AG04450 (cell line): ENCODE measurements at regions of chr9 and their contacts with region 1.

Region 1: GRCh38 chr9:2857564-2858198 is 13.8 kb upstream of the PUM3 start:
- DNase-seq: peak; percentile 33
- H3K4me3 ChIP-seq: no peak overlapping the region
- H3K27ac ChIP-seq: no peak overlapping the region
- H3K27me3 ChIP-seq: peaks cover 13% of the 10 kb centered on the region
- CTCF ChIP-seq: peak; percentile 87

Region 2: DNA sequence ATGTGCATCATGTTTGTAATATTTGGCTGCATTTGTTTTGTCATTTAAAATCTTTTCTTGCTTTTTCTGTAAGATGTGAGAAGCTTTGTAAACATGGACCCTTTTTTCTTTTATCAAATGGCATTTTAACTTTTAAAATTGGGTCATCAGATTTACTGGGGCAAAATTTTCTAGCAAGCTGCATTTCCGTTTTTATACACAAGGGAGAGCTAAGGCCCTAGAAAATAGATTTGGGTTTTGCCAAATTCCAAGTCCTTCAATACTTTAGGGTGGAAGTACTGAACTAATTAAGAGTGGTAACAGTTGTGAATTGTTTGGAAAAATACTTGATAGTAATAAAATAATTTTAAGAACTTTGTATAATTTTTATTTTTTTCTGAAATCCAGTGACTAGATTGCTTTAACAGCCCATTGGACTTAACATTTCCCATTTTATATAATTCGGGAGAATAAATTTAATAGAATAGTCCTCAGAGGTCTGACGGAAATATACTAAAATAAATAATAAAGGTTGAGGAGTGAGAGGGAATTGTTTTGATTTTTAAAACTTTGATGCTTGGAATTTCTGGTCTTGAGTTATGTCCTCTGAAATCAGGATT is 725.1 kb before region 1 on chr9:
- CTCF ChIA-PET with region 1: interaction called, 12 read pairs
- POLR2A ChIA-PET with region 1: no interaction called
- DNase-seq: no peak
- H3K4me3 ChIP-seq: no peak overlapping the region
- H3K27ac ChIP-seq: no peak overlapping the region
- H3K27me3 ChIP-seq: no peaks in the 10 kb centered on the region
- CTCF ChIP-seq: peak; percentile 80

Region 3: DNA sequence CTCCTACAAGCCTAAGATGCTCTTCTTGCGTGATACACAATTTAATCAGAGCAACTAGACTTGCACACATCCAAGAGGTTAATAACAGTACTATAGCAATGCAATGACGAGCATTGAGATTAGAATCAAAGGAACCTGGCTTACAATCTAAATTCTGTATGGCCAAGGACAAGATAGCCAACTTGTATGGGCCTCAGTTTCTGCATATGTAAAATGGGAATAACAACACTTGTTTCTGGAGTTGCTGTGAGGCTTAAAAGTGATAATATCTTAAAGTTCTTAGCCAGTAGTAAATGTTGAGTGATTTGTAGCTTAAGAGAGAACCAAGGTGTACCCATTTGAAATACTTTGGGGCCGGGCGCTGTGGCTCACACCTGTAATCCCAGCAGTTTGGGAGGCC is 11.6 kb before region 1 on chr9:
- CTCF ChIA-PET with region 1: interaction called, 39 read pairs
- POLR2A ChIA-PET with region 1: interaction called, 4 read pairs
- DNase-seq: no peak
- H3K4me3 ChIP-seq: no peak overlapping the region
- H3K27ac ChIP-seq: no peak overlapping the region
- H3K27me3 ChIP-seq: peaks cover 3% of the 10 kb centered on the region
- CTCF ChIP-seq: no peak

Region 4: GRCh38 chr9:2868883-2869282 is 11.2 kb after region 1 on chr9:
- CTCF ChIA-PET with region 1: interaction called, 18 read pairs
- POLR2A ChIA-PET with region 1: no interaction called
- DNase-seq: no peak
- H3K4me3 ChIP-seq: no peak overlapping the region
- H3K27ac ChIP-seq: no peak overlapping the region
- H3K27me3 ChIP-seq: peaks cover 17% of the 10 kb centered on the region
- CTCF ChIP-seq: no peak

Region 5: DNA sequence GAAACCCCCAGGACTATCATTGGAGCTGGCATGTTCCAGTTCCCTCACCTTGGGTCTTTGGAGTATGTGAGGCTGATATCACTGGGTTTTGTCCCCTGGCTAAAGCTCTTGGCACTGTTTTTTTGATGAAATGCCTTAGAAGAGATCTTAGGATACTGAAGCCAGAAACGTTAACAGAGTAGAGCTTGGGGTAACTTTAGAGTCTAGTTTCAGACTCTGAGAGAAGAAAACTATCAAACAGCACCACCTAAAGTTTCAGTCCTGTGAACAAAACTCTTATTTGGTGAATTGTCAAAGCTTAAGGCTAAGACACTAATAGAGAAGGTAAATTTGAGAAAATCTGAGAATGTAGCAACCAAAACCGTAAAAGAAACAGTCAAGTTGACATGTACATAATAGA is 97.9 kb after region 1 on chr9:
- CTCF ChIA-PET with region 1: interaction called, 10 read pairs
- POLR2A ChIA-PET with region 1: no interaction called
- DNase-seq: no peak
- H3K4me3 ChIP-seq: no peak overlapping the region
- H3K27ac ChIP-seq: no peak overlapping the region
- H3K27me3 ChIP-seq: no peaks in the 10 kb centered on the region
- CTCF ChIP-seq: no peak

Region 6: GRCh38 chr9:4366591-4367330 is 1509.1 kb after region 1 on chr9:
- CTCF ChIA-PET with region 1: interaction called, 14 read pairs
- POLR2A ChIA-PET with region 1: no interaction called
- DNase-seq: peak; percentile 24
- H3K4me3 ChIP-seq: no peak overlapping the region
- H3K27ac ChIP-seq: no peak overlapping the region
- H3K27me3 ChIP-seq: peaks cover 5% of the 10 kb centered on the region
- CTCF ChIP-seq: peak; percentile 87

Region 7: GRCh38 chr9:4375424-4376200 is 1517.9 kb after region 1 on chr9:
- CTCF ChIA-PET with region 1: interaction called, 27 read pairs
- POLR2A ChIA-PET with region 1: no interaction called
- DNase-seq: peak; percentile 27
- H3K4me3 ChIP-seq: no peak overlapping the region
- H3K27ac ChIP-seq: no peak overlapping the region
- H3K27me3 ChIP-seq: peaks cover 10% of the 10 kb centered on the region
- CTCF ChIP-seq: peak; percentile 60